ENCODE measurements at regions of chr16 and their contacts with region 1.

Region 1: DNA sequence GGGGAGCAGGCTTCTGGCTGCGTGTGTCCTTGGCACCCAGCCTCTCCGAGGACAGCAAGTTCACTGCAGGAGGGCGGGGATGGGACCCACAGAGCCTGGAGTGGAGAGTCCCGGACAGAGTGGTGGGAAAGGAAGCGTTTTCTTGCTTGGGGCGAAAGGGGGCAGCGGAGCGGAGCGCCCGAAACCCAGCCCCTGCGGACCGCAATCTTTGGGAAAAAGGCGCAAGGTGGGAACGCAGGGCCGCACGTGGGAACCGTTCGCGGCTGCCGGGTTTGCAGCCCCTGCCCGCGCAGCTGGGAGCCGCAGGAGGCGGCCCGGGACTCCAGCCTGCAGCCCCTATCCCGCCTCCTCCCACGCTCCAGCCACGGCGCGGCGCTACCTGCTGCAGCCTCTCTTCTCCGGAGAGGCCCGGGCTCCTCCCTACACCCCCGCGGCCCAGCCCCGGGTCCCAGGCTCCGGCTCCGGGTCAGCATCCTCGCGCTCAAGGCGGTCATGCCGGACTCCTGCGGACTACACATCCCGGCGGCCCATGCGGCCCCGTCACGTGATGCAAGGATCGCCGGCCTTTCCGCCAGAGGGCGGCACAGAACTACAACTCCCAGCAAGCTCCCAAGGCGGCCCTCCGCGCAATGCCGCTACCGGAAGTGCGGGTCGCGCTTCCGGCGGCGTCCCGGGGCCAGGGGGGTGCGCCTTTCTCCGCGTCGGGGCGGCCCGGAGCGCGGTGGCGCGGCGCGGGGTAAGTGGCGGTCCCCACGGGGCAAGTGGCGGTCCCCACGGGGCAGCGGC is at the starts of genes NTHL1 and TSC2:
- DNase-seq: peak; percentile 97
- ATAC-seq: peak; percentile 97
- H3K4me3 Mint-ChIP-seq: peak within 1 kb of the TSS; percentile 89
- H3K27ac Mint-ChIP-seq: peak within 1 kb of the TSS; percentile 85
- H3K4me1 Mint-ChIP-seq: peaks cover 18% of the 10 kb centered on the region
- H3K27me3 Mint-ChIP-seq: no peaks in the 10 kb centered on the region
- total RNA-seq, gene NTHL1: 22.6 to 26.1 TPM
- total RNA-seq, gene TSC2: 49.6 to 72.9 TPM

Region 2: GRCh38 chr16:1705688-1706385 is 341.7 kb before region 1 on chr16 and contains the start of gene MAPK8IP3:
- CTCF ChIA-PET with region 1: no interaction called
- POLR2A ChIA-PET with region 1: no interaction called
- intact Hi-C with region 1: loop called in 1 of 2 experiments (anchors 5 kb)
- DNase-seq: peak; percentile 96
- ATAC-seq: peak; percentile 80
- H3K4me3 Mint-ChIP-seq: peak within 1 kb of the TSS; percentile 92
- H3K27ac Mint-ChIP-seq: peak within 1 kb of the TSS; percentile 90
- H3K4me1 Mint-ChIP-seq: peaks cover 32% of the 10 kb centered on the region
- H3K27me3 Mint-ChIP-seq: no peaks in the 10 kb centered on the region
- total RNA-seq, gene MAPK8IP3: 56.7 to 57.6 TPM

Region 3: GRCh38 chr16:1920727-1921171 is 126.8 kb before region 1 on chr16:
- CTCF ChIA-PET with region 1: no interaction called
- POLR2A ChIA-PET with region 1: no interaction called
- intact Hi-C with region 1: no loop called
- DNase-seq: peak; percentile 38
- ATAC-seq: peak; percentile 69
- H3K4me3 Mint-ChIP-seq: no peak overlapping the region
- H3K27ac Mint-ChIP-seq: no peak overlapping the region
- H3K4me1 Mint-ChIP-seq: no peaks in the 10 kb centered on the region
- H3K27me3 Mint-ChIP-seq: peaks cover 48% of the 10 kb centered on the region

Region 4: DNA sequence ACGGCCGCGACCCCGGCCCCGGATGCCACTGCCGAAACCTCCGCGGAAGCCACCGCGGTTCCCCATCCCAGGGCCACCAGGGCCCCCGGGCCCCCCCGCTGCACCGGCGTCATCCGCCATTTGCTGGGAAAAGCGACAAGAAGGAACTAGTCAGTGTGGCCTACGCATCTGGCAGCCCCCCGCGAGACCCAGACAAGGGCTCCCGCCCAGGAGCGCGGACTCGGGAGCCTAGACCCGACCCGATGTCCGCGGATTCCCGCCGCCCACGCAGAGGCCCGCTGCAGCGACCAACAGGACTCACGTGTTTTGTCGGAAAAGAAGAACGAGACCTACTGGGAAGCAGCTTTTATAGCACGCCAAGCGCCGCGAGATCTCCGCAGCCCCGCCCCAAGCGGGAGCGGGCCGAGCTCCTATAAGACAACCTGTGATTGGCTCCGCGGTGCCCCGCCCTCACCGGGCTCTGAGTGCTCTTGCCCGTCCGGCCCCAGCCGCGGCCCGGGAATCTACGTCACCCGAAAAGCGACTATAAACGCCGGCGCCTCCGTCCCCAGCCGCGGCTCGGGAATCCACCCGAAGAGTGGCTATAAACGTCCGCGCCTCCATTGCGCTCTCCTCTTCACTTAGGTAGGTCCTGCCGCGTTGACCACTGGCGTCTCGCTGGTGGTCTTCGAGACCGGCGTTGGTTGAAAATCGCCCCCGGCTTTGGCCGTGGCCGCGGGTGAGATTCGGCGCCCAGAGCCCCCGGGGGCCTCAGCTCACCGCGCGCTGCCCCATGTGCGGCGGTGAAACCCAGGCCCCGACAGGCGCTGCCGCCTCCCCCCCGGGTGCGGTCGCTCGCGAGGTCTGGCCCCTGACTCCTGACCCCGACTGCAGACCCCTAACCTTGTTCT is 82.8 kb before region 1 on chr16 and contains the start of gene RPS2:
- CTCF ChIA-PET with region 1: interaction called, 3 read pairs
- POLR2A ChIA-PET with region 1: interaction called, 8 read pairs
- intact Hi-C with region 1: loop called in 1 of 2 experiments (anchors 2 kb)
- DNase-seq: peak; percentile 100
- ATAC-seq: peak; percentile 81
- H3K4me3 Mint-ChIP-seq: peak within 1 kb of the TSS; percentile 96
- H3K27ac Mint-ChIP-seq: peak within 1 kb of the TSS; percentile 99
- H3K4me1 Mint-ChIP-seq: peaks cover 38% of the 10 kb centered on the region
- H3K27me3 Mint-ChIP-seq: no peaks in the 10 kb centered on the region
- total RNA-seq, gene RPS2: 5,351 to 6,287 TPM

Region 5: GRCh38 chr16:1991948-1992703 is 55.4 kb before region 1 on chr16:
- CTCF ChIA-PET with region 1: interaction called, 3 read pairs
- POLR2A ChIA-PET with region 1: no interaction called
- intact Hi-C with region 1: loop called in 1 of 2 experiments (anchors 1 kb)
- DNase-seq: peak; percentile 100
- ATAC-seq: peak; percentile 70
- H3K4me3 Mint-ChIP-seq: peak overlapping the region; percentile 56
- H3K27ac Mint-ChIP-seq: no peak overlapping the region
- H3K4me1 Mint-ChIP-seq: peaks cover 27% of the 10 kb centered on the region
- H3K27me3 Mint-ChIP-seq: peaks cover 15% of the 10 kb centered on the region

Region 6: GRCh38 chr16:2023098-2023925 is 24.2 kb before region 1 on chr16:
- CTCF ChIA-PET with region 1: interaction called, 4 read pairs
- POLR2A ChIA-PET with region 1: interaction called, 3 read pairs
- intact Hi-C with region 1: loop called in 1 of 2 experiments (anchors 1 kb)
- DNase-seq: peak; percentile 97
- ATAC-seq: peak; percentile 86
- H3K4me3 Mint-ChIP-seq: peak overlapping the region; percentile 46
- H3K27ac Mint-ChIP-seq: no peak overlapping the region
- H3K4me1 Mint-ChIP-seq: peaks cover 15% of the 10 kb centered on the region
- H3K27me3 Mint-ChIP-seq: peaks cover 27% of the 10 kb centered on the region

Region 7: DNA sequence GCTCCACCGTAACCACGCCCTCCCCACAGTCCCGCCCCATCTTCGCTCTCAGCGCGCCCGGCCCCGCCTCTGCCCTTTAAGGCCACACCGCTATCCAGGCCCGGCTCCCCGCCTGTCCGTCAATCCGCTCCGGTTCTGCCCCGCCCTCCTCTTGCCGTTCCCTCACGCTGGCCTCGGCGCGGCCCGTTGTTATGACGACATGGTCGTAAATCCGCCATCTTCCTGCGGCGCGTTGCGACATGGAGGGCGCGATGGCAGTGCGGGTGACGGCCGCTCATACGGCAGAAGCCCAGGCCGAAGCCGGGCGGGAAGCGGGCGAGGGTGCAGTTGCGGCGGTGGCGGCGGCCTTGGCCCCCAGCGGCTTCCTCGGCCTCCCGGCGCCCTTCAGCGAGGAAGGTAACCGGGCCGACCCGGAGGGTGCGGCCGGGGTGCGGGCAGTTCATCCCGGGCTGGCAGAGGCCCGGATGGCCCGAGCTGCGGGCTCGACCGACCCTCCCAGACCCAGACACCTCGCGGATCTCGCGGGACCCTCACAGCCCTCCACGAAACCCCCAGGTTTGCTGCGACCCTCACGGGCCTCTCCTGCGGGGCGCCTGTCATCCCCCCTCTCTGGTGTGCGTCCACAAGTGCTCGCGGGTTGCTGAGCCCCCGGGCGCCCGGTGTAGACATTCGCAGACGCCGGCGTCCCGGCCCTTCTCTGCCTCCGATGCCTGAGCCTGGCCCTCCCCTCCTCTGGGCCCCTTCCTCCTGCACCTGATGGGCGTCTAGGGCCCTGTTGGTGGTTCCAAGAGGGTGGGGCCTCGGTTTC is 176.1 kb after region 1 on chr16 and contains the start of gene E4F1:
- CTCF ChIA-PET with region 1: no interaction called
- POLR2A ChIA-PET with region 1: no interaction called
- intact Hi-C with region 1: loop called in 1 of 2 experiments (anchors 1 kb)
- DNase-seq: peak; percentile 100
- ATAC-seq: peak; percentile 99
- H3K4me3 Mint-ChIP-seq: peak within 1 kb of the TSS; percentile 78
- H3K27ac Mint-ChIP-seq: peak within 1 kb of the TSS; percentile 13
- H3K4me1 Mint-ChIP-seq: peaks cover 15% of the 10 kb centered on the region
- H3K27me3 Mint-ChIP-seq: no peaks in the 10 kb centered on the region
- total RNA-seq, gene E4F1: 18.0 to 18.6 TPM

Region 8: GRCh38 chr16:2513405-2514322 is 466.1 kb after region 1 on chr16 and contains the start of gene ATP6V0C:
- CTCF ChIA-PET with region 1: no interaction called
- POLR2A ChIA-PET with region 1: no interaction called
- intact Hi-C with region 1: loop called in 1 of 2 experiments (anchors 1 kb)
- DNase-seq: peak; percentile 95
- ATAC-seq: peak; percentile 90
- H3K4me3 Mint-ChIP-seq: peak within 1 kb of the TSS; percentile 93
- H3K27ac Mint-ChIP-seq: peak within 1 kb of the TSS; percentile 95
- H3K4me1 Mint-ChIP-seq: peaks cover 44% of the 10 kb centered on the region
- H3K27me3 Mint-ChIP-seq: no peaks in the 10 kb centered on the region
- total RNA-seq, gene ATP6V0C: 91.7 to 130 TPM